Dendritic cell treated with granulocyte-macrophage colony-stimulating factor and Interleukin-4, amounts not matched to agents 40 ng/mL and 50 ng/mL, for 4 days (primary cell): ENCODE measurements at regions of chr15 and their contacts with region 1.

Region 1: GRCh38 chr15:36579792-36580431 is 486 bp downstream of the CDIN1 start:
- H3K4me3 Mint-ChIP-seq: peak overlapping the region; percentile 78
- H3K27ac Mint-ChIP-seq: peak overlapping the region; percentile 92
- H3K4me1 Mint-ChIP-seq: peaks cover 7% of the 10 kb centered on the region
- H3K27me3 Mint-ChIP-seq: peaks cover 17% of the 10 kb centered on the region

Region 2: GRCh38 chr15:35533130-35534110 is 1046.5 kb before region 1 on chr15:
- intact Hi-C with region 1: loop called (anchors 10 kb)
- H3K4me3 Mint-ChIP-seq: no peak overlapping the region
- H3K27ac Mint-ChIP-seq: no peak overlapping the region
- H3K4me1 Mint-ChIP-seq: no peaks in the 10 kb centered on the region
- H3K27me3 Mint-ChIP-seq: no peaks in the 10 kb centered on the region

Region 3: DNA sequence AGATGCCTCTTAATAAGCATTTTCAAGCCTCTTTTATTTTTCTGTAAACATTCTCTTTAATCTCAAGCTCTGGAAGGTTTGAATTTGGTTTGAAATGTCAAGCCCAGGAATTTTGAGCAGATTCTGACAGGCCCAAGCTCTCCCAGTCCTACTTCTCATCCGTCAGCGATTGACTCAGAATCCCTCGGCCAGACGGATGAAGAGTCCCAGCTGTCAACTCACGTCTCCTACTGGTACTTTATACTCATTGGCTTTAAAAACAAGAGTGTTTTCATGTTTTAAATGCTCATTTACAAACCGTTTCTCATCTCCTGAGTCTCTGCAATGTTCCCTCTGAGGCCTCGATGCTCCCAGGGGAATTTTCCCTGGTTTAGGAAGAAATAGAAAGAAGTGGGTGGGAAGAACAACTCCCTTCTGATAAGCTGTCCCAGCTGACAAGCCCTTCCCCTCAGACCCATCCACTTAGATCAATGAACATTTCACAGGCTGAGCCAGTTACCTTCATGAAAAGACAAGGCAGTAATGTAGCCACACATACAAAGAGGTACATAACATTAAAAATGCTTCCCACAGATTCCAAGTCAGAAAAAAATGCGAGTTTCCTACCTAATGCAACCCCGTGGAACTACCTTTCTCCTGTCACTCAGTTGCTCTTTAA is 555.8 kb before region 1 on chr15:
- intact Hi-C with region 1: no loop called
- H3K4me3 Mint-ChIP-seq: no peak overlapping the region
- H3K27ac Mint-ChIP-seq: no peak overlapping the region
- H3K4me1 Mint-ChIP-seq: no peaks in the 10 kb centered on the region
- H3K27me3 Mint-ChIP-seq: no peaks in the 10 kb centered on the region

Region 4: DNA sequence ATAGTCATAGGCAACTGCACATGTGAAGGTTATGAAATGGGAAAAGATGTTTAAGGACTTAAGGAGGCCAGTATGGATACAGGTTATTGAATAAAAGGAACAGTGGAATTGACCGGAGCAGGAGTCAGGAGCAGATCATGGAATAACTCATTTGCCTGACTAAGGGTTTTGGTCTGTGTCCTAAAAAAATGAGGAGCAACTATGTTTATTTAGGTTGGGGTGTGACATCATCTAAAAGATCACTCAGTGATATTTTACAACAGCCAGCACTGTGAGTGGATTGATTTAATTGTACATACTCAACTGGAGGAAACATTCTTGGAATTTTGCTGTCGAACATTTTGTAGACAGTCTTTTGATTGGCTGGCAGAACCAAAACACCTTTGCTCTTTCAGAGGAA is 349.2 kb before region 1 on chr15:
- intact Hi-C with region 1: no loop called
- H3K4me3 Mint-ChIP-seq: no peak overlapping the region
- H3K27ac Mint-ChIP-seq: no peak overlapping the region
- H3K4me1 Mint-ChIP-seq: no peaks in the 10 kb centered on the region
- H3K27me3 Mint-ChIP-seq: no peaks in the 10 kb centered on the region